Right ventricle myocardium inferior (tissue), 1 donor: ENCODE measurements at regions of chr18 and their contacts with region 1.

Region 1: DNA sequence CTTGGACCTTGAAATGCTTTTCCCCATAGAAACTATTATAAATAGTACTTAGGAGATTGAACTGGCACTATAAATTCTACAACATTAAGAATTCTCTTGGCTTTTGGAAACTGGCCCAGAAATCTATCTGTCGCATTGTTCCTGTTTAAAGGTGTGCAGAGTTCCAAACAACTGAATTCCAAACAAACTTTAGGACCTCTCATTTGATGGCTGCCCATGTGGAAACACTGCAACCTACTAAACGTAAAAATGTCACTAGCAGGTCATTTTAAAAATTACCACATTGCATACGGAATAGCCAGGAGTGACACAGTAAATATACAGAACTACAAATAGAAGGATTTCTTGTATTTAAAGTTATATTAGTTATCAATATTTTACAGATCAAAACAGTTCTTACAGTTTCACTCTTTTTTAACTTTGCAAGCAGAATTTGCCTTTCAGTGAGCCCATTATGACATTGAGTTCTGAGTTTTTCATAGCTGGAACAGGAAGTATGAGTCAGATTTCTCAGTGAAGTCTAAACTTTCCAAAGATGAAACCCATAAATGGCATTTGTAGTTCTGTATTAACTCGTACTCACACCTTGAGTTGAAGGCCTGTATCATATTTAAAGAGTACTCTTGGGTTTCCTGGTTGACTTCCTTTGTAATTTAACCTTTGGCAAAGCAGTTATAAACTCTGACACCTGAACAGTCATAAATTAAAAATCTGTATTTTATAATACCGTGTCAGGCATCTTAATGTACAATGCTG is 142.3 kb upstream of the BOD1L2 start:
- DNase-seq: no peak
- ATAC-seq: no peak

Region 2: DNA sequence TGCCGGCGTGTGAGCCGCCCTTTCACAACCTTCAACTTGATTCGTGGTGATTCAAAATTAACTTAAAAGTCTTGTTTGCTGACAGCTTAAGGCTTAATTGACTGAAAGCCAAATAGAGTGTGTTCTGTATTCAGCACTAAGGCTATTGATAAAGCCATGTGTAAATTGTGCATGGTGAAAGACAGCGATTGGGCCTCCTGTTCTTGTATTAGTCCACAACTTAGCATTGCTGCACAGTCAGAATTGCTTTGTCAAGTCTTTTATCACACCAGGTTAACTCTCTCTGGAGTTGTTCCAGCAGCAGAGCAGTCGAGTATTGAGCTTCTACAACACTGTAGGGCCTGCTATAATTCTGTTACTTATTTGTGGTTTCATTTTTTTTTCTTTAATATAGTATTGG is 143.3 kb before region 1 on chr18:
- intact Hi-C with region 1: no loop called
- DNase-seq: no peak
- ATAC-seq: no peak

Region 3: DNA sequence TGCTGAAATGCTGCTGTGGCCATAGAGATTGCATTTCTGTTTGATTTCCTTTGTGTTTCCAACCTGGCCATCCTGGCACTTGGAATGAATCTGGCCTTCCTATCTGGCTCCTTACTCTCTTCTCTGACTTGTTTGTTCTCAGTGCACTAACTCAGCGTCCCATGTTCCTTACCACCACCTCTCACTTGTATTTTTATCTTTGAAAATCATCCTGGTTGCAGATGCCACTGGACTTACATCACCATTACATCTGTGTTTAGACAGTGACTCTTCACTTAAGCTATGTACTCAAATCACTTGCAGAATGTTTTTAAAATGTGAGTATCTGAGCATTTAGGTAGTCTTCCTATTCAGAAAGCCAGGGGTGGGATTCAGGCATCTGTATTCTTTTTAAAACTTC is 113.9 kb before region 1 on chr18:
- intact Hi-C with region 1: loop called (anchors 10 kb)
- DNase-seq: no peak
- ATAC-seq: no peak

Region 4: DNA sequence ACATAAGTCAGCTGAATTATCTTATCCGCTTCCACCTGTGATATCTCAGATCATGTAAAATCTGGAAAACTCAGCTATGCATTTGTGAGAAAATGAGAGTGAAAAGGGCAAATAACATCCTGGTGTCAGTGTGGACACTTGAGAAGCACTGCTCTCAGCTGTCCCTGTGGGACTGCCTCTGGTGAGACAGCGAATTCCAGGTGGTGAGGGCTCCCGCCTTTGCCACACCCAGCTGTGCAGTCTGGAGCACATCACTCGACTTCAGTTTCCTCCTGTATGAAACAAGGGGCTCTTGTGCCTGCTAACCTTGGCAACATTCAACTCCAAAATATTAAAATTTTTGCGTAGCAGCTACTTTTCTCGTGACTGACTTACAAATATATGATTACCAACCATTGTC is 52.5 kb before region 1 on chr18:
- intact Hi-C with region 1: loop called (anchors 5 kb)
- DNase-seq: no peak
- ATAC-seq: no peak

Region 5: DNA sequence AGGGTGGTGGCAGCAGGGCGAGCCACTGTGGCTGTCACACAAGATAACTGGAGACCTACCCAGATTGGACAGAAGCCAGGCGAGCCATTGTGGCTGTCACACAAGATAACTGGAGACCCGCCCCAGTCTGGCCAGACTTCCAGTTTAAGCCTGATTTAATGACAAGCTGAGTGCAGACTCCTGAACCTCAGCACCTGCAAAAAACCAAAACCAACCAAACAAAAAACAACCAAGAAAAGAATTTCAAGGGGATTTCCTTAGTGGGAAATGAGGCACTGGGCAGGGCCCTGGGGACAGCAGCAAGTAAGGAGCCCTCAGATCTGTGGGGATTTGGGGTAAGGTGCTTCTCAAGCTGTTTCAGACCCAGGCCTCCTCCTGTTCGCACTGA is 47.1 kb after region 1 on chr18:
- intact Hi-C with region 1: no loop called
- DNase-seq: no peak
- ATAC-seq: no peak

Region 6: DNA sequence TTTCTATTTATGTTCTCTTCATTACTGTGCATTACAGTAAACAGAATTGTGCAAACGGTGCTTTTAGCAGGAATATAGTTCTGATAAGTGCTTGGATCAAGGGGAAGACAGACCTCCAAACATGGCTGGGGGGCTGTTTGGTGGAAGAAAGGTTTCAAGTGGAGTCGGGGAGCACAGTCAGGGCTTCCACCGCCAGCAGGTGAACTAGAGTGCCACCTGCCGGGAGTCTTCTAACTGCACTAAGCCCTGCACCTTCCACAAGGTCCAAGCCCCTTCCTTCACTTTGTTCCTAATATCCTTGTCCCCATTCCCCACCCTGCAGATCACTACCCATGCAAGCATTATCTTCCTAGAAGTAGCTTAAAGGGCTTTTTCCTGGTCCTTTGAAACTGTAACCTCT is 441.8 kb after region 1 on chr18:
- intact Hi-C with region 1: no loop called
- DNase-seq: no peak
- ATAC-seq: no peak